BJ (cell line): ENCODE measurements at regions of chr7 and their contacts with region 1.

Region 1: DNA sequence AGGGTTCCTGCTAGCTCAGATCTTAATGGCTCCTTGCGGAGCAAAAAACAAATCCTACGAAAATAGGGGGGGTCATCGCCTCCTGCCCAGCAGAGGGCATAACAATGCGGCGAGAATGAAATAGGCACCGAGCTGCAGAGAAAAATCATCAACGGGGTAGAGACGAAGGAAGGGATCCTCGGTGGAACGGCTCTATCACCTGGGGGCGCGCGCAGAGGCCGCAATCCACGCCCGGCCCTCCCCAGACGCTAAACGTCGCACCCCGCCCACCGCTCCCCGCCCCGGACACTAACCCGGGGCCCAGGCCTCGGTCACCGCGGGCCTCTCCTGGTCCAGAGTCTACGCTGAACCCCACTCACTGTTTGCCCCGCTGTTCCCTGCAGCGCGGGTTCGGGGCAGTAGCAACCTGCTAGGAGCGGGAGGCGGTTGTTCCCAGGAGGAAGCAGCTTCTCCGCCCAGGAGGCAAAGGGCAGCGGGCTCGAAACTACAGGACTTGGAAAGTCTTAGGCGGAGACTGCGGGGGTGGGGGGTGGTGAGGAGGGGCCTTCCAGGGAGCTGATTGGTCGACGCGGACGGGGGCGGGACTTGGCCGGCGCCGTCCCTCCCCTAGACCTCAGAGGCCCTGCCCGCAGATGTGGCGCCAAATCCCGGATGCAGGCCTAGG is at the start of gene TCAF1:
- DNase-seq: peak; percentile 70
- H3K4me3 ChIP-seq: peak within 1 kb of the TSS; percentile 87
- H3K27me3 ChIP-seq: no peaks in the 10 kb centered on the region
- CTCF ChIP-seq: peak; percentile 47
- polyA plus RNA-seq, gene TCAF1: 39.9 and 55.2 TPM in 2 replicates

Region 2: DNA sequence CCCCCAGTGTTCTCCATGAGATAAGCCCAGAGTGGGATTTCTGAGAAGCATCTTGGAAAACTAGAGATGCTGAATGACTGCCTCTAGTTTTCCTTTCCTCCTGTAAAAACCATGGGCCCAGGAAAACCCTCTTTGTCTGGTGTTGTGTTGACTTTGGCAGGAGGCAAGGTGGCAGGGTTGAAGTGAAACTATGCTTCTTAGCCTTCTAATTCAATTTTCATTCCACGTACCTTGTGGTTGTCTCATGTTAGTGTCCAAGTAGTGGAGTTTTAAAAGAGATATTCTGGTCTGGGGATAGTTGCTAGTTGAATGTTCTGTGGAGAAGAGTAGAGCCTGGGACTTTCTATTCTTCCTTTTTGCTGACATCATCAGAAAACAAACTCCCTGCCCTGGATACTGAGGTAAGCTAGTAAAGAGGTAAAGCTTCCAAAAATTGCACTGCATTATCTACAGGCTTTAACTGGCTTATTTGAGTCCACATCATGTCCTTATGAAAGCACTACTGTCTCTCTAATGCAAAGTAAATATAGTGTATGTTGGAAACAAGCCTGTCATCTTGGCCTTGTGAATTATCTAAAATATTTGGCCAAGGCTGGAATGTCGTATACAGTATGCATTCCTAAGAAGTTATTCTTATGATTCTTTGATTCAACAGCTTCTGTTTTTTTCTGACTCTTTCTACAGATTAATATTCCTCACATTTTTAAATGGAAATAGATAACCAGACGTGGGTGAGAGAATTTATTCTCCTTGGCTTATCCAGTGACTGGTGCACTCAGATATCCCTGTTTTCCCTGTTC is 32.9 kb after region 1 on chr7 and contains the start of gene OR2F2:
- CTCF ChIA-PET with region 1: interaction called, 10 read pairs
- POLR2A ChIA-PET with region 1: no interaction called
- DNase-seq: peak; percentile 37
- H3K4me3 ChIP-seq: no peak within 1 kb of the TSS
- H3K27me3 ChIP-seq: no peaks in the 10 kb centered on the region
- CTCF ChIP-seq: no peak
- polyA plus RNA-seq, gene OR2F2: not detected in 2 replicates

Region 3: DNA sequence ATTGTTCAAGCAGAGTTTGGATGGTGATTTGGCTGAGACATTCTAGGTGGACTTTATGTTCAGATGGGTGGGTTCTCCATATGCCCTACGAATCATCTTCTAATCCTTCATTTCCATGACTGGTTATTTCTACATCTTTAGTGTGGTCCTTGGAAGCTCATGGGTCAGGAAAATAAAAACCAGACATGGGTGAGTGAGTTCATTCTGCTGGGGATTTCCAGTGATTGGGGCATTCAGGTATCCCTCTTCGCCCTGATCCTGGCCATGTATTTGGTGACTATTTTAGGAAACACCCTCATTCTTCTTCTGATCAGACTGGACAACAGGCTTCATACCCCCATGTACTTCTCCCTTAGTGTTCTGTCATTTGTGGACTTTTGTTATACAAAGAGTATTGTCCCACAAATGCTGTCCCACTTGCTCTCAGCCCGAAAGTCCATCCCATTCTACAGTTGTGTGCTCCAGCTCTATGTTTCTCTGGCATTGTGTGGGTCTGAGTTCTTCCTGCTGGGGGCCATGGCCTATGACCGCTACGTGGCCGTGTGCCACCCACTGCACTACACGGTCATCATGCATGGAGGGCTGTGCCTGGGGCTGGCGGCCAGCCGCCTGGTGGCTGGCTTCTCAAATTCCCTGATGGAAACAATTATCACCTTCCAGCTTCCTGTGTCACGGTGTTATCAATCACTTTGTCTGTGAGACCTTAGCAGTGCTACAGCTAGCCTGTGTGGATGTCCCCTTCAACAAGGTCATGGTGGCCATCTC is 79.1 kb after region 1 on chr7:
- CTCF ChIA-PET with region 1: no interaction called
- POLR2A ChIA-PET with region 1: no interaction called
- DNase-seq: no peak
- H3K4me3 ChIP-seq: no peak overlapping the region
- H3K27me3 ChIP-seq: no peaks in the 10 kb centered on the region
- CTCF ChIP-seq: no peak

Region 4: GRCh38 chr7:143992670-143993069 is 90.9 kb after region 1 on chr7:
- CTCF ChIA-PET with region 1: no interaction called
- POLR2A ChIA-PET with region 1: no interaction called
- DNase-seq: no peak
- H3K4me3 ChIP-seq: no peak overlapping the region
- H3K27me3 ChIP-seq: no peaks in the 10 kb centered on the region
- CTCF ChIP-seq: no peak

Region 5: GRCh38 chr7:144011458-144012230 is 109.8 kb after region 1 on chr7:
- CTCF ChIA-PET with region 1: interaction called, 10 read pairs
- POLR2A ChIA-PET with region 1: no interaction called
- DNase-seq: no peak
- H3K4me3 ChIP-seq: no peak overlapping the region
- H3K27me3 ChIP-seq: no peaks in the 10 kb centered on the region
- CTCF ChIP-seq: peak; percentile 45

Region 6: GRCh38 chr7:144037414-144038035 is 135.7 kb after region 1 on chr7:
- CTCF ChIA-PET with region 1: no interaction called
- POLR2A ChIA-PET with region 1: no interaction called
- DNase-seq: no peak
- H3K4me3 ChIP-seq: no peak overlapping the region
- H3K27me3 ChIP-seq: no peaks in the 10 kb centered on the region
- CTCF ChIP-seq: no peak